ENCODE measurements at regions of chr5 and their contacts with region 1.

Region 1: GRCh38 chr5:58117542-58117941 is 342.3 kb downstream of the PLK2 start:
- DNase-seq: no peak

Region 2: GRCh38 chr5:58077416-58077815 is 40.1 kb before region 1 on chr5:
- intact Hi-C with region 1: loop called (anchors 5 kb)
- DNase-seq: no peak